AG04450 (cell line): ENCODE measurements at regions of chr17 and their contacts with region 1.

Region 1: DNA sequence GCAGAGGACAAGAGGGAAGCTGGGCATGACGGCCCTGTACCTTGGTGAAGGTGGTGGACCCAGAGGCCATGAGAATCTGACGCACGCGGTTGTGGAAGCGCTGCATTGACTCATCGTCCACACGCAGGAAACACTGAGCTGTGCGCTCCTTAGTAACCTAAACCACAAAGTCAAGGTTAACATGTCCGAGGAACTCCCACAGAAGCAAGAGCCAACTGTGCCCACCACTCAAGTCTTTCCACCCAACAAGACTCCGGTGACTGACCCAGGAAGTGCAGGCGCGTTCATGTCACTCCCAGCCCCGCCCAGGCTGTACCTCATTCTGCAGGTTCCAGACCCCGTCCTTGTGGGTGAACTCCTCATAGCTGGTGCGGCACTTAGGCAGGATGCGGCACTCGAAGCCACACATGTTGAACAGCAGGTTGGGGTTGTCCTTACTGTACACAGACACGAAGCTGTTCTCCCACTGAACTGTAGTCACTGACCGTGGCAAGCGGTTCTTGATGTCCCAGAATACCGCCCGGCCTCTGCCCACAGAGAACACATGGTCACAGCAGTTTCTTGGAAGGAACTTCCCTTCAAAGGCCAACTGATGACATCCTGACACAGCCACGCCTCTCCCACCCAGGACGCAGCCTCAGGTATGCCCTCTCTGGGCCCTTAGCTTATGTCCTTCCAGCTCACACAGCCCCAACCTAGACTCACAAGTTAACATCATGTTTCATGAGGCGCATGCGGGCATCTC is 11.5 kb downstream of the PRPF8 start:
- DNase-seq: no peak
- H3K4me3 ChIP-seq: no peak overlapping the region
- H3K27ac ChIP-seq: peak overlapping the region; percentile 11
- H3K27me3 ChIP-seq: no peaks in the 10 kb centered on the region
- CTCF ChIP-seq: no peak

Region 2: DNA sequence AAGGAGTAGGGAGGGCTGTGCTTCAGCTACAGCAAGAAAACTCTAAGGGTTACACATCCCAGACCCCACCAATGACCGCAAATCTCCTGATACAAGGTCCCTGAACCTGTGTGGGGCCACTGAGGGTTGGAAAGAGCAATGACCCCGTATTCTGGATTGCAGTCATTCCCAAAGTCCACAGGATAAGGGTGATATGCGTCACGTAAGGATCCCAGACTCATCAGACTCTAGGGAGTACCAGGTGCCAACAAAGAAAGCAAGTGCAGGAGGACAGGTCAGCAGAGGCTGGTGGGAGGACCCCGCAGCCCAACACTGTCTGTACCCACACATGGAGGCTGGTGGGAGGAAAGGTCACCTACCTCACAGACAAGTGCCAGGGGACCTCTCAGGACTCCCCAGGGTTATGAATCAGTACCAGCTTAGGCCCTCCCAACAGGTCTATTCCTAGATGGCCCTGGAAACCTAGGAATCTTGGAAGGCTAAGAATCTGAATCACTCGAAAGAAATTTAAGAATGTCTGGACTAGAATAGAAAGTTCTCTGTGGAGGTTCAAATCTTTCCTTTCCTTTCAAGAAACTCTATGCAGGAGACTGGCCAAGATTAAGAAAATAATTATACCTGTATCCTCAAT is 126.8 kb before region 1 on chr17:
- CTCF ChIA-PET with region 1: no interaction called
- POLR2A ChIA-PET with region 1: no interaction called
- DNase-seq: no peak
- H3K4me3 ChIP-seq: no peak overlapping the region
- H3K27ac ChIP-seq: no peak overlapping the region
- H3K27me3 ChIP-seq: no peaks in the 10 kb centered on the region
- CTCF ChIP-seq: no peak

Region 3: DNA sequence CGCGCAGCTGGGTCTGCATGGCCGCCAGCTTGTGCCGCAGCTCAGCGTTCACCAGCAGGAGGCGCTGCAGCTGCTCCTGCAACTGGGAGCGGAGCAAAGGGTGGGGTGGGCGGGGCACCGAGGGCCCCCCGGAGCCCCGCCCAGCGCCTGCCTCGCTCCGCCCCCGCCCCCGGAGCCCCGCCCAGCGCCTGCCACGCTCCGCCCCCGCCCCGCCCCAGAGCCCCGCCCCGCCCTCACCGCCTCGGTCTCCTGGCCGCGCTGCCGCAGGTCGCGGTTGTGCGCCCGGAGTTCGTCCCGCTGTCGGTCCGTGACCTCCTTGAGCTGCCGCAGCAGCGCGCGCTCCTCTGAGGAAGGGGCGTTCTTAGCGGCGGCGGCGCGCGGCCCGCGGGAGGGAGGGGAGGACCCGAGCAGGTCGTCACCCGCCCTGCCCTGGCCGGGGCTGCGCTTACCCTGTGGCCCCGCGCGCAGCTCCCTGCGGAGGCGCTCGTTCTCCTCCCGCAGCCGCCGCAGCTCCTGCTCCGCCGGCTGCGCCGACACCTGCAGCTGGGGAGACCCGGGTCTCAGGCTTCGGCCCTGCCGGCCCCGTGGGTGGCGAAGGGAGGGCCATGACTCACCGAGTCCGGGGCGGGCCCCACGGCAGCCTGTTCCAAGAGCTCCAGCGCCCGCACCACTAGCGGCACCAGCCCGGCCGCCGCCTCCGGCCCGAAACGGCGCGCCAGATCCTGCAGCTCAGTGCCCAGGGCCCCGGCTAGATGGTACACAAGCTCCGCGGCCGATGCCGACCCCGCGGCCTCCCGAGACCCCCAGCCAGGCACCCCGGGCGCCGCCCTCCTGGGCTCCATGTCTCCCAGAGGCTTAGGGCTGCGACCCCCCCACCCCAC is 24.0 kb before region 1 on chr17:
- CTCF ChIA-PET with region 1: interaction called, 15 read pairs
- POLR2A ChIA-PET with region 1: interaction called, 25 read pairs
- DNase-seq: peak; percentile 93
- H3K4me3 ChIP-seq: peak overlapping the region; percentile 63
- H3K27ac ChIP-seq: peak overlapping the region; percentile 57
- H3K27me3 ChIP-seq: no peaks in the 10 kb centered on the region
- CTCF ChIP-seq: peak; percentile 78; the same call in 1 of the 2 replicates

Region 4: GRCh38 chr17:1684378-1685189 is 11.4 kb after region 1 on chr17 and contains the start of gene PRPF8:
- CTCF ChIA-PET with region 1: interaction called, 16 read pairs
- POLR2A ChIA-PET with region 1: interaction called, 8 read pairs
- DNase-seq: peak; percentile 91
- H3K4me3 ChIP-seq: peak within 1 kb of the TSS; percentile 83
- H3K27ac ChIP-seq: peak within 1 kb of the TSS; percentile 86
- H3K27me3 ChIP-seq: no peaks in the 10 kb centered on the region
- CTCF ChIP-seq: no peak
- polyA plus RNA-seq, gene PRPF8: 126 and 161 TPM in 2 replicates

Region 5: DNA sequence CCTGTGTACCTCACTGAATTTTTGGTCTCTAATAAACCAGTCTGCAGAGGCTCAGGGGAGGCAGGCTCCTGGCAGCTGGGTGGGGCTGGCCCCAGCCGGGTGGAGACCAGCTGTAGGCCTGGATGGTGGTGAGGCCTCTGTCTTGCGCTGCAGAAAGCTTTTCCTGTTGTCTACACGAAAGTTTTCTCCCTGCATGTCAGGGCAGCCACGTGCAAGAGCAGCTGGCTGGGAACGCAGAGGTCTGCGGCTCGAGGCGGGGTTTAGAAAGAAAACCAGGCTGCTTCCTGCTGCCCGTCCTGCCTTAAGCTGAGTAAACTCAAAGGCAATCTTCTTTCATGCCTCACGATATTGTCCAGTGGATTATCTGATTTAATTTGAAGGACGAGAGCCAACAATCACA is 91.1 kb after region 1 on chr17:
- CTCF ChIA-PET with region 1: no interaction called
- POLR2A ChIA-PET with region 1: no interaction called
- DNase-seq: peak; percentile 75
- H3K4me3 ChIP-seq: peak overlapping the region; percentile 75
- H3K27ac ChIP-seq: peak overlapping the region; percentile 86
- H3K27me3 ChIP-seq: no peaks in the 10 kb centered on the region
- CTCF ChIP-seq: no peak

Region 6: DNA sequence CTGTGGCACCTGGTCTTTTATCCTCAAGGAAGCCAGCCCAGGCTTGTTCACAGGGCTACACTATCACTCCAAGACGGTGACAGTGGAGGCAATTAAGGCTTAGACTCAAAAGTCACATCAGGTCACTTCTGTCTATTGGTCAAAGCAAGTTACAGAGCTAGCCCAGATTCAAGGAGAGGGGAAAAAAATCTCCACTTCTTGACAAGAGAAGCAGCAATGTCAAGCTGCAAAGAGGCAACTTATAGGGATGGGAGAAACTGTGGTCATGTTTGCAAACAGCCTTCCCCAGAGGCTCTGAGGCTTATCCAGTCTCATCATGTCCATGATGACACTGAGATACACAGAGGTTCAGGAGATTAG is 120.2 kb after region 1 on chr17:
- CTCF ChIA-PET with region 1: no interaction called
- POLR2A ChIA-PET with region 1: no interaction called
- DNase-seq: no peak
- H3K4me3 ChIP-seq: no peak overlapping the region
- H3K27ac ChIP-seq: peak overlapping the region; percentile 3
- H3K27me3 ChIP-seq: no peaks in the 10 kb centered on the region
- CTCF ChIP-seq: no peak